G401 (cell line): ENCODE measurements at regions of chr7 and their contacts with region 1.

Region 1: GRCh38 chr7:101936611-101937231 is 119.3 kb downstream of the CUX1 start:
- DNase-seq: peak; percentile 42

Region 2: GRCh38 chr7:101898106-101898505 is 38.6 kb before region 1 on chr7:
- in situ Hi-C with region 1: loop called (anchors 5 kb)
- DNase-seq: peak; percentile 60

Region 3: DNA sequence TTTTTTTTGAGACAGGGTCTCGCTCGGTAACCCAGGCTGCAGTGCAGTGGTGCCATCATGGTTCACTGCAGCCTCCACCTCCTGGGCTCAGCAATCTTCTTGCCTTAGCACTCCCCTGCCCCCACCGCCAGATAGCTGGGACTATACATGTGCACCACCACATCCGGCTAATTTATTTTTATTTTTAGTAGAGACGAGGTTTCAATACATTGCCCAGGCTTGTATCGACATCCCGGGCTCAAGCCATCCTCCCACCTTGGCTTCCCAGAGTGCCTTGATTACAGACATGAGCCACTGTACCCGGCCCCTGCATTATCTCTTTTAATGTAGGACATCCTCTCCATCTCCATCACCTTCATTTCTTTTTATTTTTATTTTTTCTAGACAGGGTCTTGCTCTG is 94.0 kb after region 1 on chr7:
- in situ Hi-C with region 1: loop called (anchors 5 kb)
- DNase-seq: no peak